Cardiac septum (tissue), 1 donor: ENCODE measurements at regions of chr14 and their contacts with region 1.

Region 1: DNA sequence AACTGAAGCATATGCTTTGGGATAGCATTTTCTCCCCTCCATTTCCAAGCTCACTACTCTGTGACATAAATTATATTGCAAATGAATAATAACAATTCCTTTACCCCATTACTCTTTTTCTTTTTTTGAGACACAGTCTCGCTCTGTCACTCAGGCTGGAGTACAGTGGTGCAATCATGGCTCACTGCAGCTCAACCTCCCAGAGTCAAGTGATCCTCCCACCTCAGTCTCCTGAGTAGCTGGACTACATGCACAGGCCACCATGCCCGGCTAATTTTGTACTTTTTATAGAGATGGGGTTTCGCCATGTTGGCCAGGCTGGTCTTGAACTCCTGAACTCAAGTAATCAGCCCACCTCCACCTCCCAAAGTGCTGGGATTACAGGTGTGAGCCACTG is 49.2 kb upstream of the GTF2A1 start:
- DNase-seq: no peak

Region 2: GRCh38 chr14:81453166-81453766 is 183.3 kb after region 1 on chr14:
- intact Hi-C with region 1: loop called (anchors 2 kb)
- DNase-seq: no peak